ENCODE measurements at regions of chr12 and their contacts with region 1.

Region 1: DNA sequence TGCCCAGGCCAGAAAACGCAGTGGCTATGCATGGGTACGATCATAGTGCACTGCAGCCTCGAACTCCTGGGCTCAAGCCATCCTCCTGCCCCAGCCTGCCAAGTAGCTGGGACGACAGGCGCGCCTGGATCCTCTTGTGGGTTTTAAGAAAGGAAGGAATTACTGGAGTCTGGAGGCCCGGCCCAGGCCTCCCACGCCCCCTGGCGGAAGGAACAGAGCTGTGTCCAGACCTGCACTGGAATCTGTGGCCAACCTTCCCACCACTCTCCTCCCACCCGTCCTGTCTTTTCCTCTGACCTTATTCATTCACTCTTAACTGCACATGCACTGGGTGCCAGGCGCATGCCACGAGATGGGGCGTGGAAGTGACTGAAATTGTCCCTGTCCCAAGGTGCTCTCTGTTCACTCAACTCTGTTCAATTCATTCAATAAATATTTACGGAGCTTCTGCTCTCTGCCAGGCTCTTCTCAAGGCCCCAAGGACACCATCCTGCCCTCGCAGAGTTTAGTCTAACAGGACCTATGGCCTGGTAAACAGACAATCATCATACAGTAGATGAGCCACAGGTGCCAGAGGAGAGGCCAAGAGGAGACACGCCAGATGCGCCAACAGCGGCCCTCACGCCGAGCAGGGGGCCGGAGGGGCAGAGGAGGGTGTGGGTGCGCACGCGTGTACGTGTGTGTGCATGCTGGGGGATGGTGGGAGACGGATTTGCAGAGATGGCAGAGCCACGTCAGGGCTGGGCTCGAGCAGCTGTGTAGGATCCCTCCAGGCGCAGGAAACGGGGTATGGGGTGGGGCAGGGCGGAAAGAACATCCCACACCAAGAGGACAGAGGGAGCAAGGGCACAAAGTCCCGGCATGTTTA is 13.7 kb upstream of the TMEM106C start:
- DNase-seq: peak; percentile 50
- ATAC-seq: peak; percentile 97
- H3K4me3 ChIP-seq: no peak overlapping the region
- H3K27ac ChIP-seq: no peak overlapping the region
- H3K4me1 ChIP-seq: no peaks in the 10 kb centered on the region; the same call in 1 of the 2 replicates
- H3K27me3 ChIP-seq: peaks cover 3% of the 10 kb centered on the region; the same call in 1 of the 2 replicates
- CTCF ChIP-seq: peak; percentile 97

Region 2: GRCh38 chr12:47876440-47876960 is 73.2 kb before region 1 on chr12:
- CTCF ChIA-PET with region 1: no interaction called
- POLR2A ChIA-PET with region 1: interaction called, 3 read pairs
- in situ Hi-C with region 1: no loop called
- intact Hi-C with region 1: loop called (anchors 2 kb)
- DNase-seq: no peak
- ATAC-seq: no peak
- H3K4me3 ChIP-seq: no peak overlapping the region
- H3K27ac ChIP-seq: no peak overlapping the region
- H3K4me1 ChIP-seq: no peaks in the 10 kb centered on the region
- H3K27me3 ChIP-seq: peaks cover 3% of the 10 kb centered on the region; the same call in 1 of the 2 replicates
- CTCF ChIP-seq: no peak

Region 3: GRCh38 chr12:48165094-48165981 is 215.7 kb after region 1 on chr12:
- CTCF ChIA-PET with region 1: interaction called, 3 read pairs
- POLR2A ChIA-PET with region 1: no interaction called
- in situ Hi-C with region 1: no loop called
- intact Hi-C with region 1: loop called (anchors 10 kb)
- DNase-seq: peak; percentile 52
- ATAC-seq: peak; percentile 87; the same call in 1 of the 2 replicates
- H3K4me3 ChIP-seq: no peak overlapping the region
- H3K27ac ChIP-seq: no peak overlapping the region
- H3K4me1 ChIP-seq: no peaks in the 10 kb centered on the region
- H3K27me3 ChIP-seq: peaks cover 2% of the 10 kb centered on the region; the same call in 1 of the 2 replicates
- CTCF ChIP-seq: peak; percentile 86; the same call in 1 of the 2 replicates